H1 (cell line): ENCODE measurements at regions of chr7 and their contacts with region 1.

Region 1: GRCh38 chr7:5557920-5558401 is 134.3 kb upstream of the TNRC18 start:
- DNase-seq: no peak
- H3K4me3 ChIP-seq: no peak overlapping the region
- H3K27ac ChIP-seq: no peak overlapping the region
- H3K4me1 ChIP-seq: peaks cover 0 to 15% (median 11%) of the 10 kb centered on the region in 4 experiments; a peak in 5 of 7 replicates
- H3K27me3 ChIP-seq: no peaks in the 10 kb centered on the region
- CTCF ChIP-seq: no peak
- EP300 ChIP-seq: no peak
- POLR2A ChIP-seq: no peak
- RAD21 ChIP-seq: no peak

Region 2: GRCh38 chr7:5500056-5500776 is 57.7 kb before region 1 on chr7:
- CTCF ChIA-PET with region 1: interaction called, 20 read pairs
- POLR2A ChIA-PET with region 1: no interaction called
- DNase-seq: no peak
- H3K4me3 ChIP-seq: no peak overlapping the region
- H3K27ac ChIP-seq: no peak overlapping the region
- H3K4me1 ChIP-seq: no peaks in the 10 kb centered on the region; a peak in 2 of 7 replicates
- H3K27me3 ChIP-seq: no peaks in the 10 kb centered on the region
- CTCF ChIP-seq: no peak
- EP300 ChIP-seq: no peak
- POLR2A ChIP-seq: no peak
- RAD21 ChIP-seq: no peak

Region 3: DNA sequence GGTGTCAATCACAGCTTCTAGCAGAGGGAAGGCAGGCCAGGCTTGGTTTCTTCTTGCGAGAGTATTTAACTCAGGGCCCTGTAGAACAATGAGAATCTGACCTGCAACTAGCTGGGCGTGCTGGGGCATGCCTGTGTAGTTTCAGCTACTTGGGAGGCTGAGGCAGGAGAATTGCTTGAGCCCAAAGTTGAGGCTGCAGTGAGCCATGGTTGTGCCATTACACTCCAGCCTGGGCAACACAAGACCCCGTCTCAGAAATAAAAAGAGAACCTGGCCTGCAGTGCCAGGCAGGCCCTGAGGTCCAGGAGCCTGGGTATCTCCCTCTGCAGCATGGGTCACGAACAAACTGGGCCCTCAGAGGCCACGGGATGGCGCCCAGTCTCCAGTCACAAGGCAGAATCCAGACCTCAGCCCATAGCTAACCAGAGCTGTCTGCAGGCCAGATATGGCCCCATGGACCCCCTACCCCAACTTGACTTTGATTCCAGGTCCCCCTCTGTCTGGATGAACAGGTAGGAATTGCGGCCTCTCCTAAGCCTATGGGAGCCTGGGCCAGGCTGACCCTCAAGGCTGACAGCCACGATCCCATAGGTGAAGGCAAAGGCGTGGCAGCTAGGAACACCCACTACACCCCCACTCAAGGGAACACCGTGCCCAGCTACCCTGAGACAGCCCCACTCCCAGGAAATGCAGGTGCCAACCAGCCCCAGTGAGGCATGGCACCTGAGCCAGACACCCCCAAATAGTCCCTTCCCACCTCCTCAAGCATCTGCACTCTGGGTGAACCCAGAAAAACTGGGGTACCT is 31.7 kb before region 1 on chr7:
- CTCF ChIA-PET with region 1: interaction called, 18 read pairs
- POLR2A ChIA-PET with region 1: no interaction called
- DNase-seq: peak in 1 of 2 experiments; percentile 76
- H3K4me3 ChIP-seq: peak overlapping the region in 1 of 4 experiments; percentile 90; a peak in 2 of 8 replicates
- H3K27ac ChIP-seq: peak overlapping the region; percentile 24; the same call in 1 of the 2 replicates
- H3K4me1 ChIP-seq: peaks cover 0 to 21% (median 12%) of the 10 kb centered on the region in 4 experiments; a peak in 6 of 7 replicates
- H3K27me3 ChIP-seq: no peaks in the 10 kb centered on the region
- CTCF ChIP-seq: peak in 1 of 3 experiments; percentile 8; a peak in 1 of 4 replicates
- EP300 ChIP-seq: no peak
- POLR2A ChIP-seq: peak in 1 of 2 experiments; percentile 72; a peak in 2 of 3 replicates
- RAD21 ChIP-seq: peak; percentile 17 to 26; a peak in 2 of 4 replicates

Region 4: GRCh38 chr7:5574770-5575269 is 16.9 kb after region 1 on chr7:
- CTCF ChIA-PET with region 1: interaction called, 11 read pairs
- POLR2A ChIA-PET with region 1: no interaction called
- DNase-seq: peak in 1 of 2 experiments; percentile 64
- H3K4me3 ChIP-seq: peak overlapping the region in 2 of 4 experiments; percentile 5 to 44; a peak in 3 of 8 replicates
- H3K27ac ChIP-seq: no peak overlapping the region; the same call in 1 of the 2 replicates
- H3K4me1 ChIP-seq: peaks cover 0 to 11% (median 6%) of the 10 kb centered on the region in 4 experiments; a peak in 6 of 7 replicates
- H3K27me3 ChIP-seq: no peaks in the 10 kb centered on the region
- CTCF ChIP-seq: no peak
- EP300 ChIP-seq: no peak
- POLR2A ChIP-seq: no peak
- RAD21 ChIP-seq: no peak

Region 5: GRCh38 chr7:5607951-5608656 is 50.1 kb after region 1 on chr7:
- CTCF ChIA-PET with region 1: interaction called, 10 read pairs
- POLR2A ChIA-PET with region 1: no interaction called
- DNase-seq: no peak
- H3K4me3 ChIP-seq: no peak overlapping the region
- H3K27ac ChIP-seq: no peak overlapping the region
- H3K4me1 ChIP-seq: peaks cover 2 to 21% (median 9%) of the 10 kb centered on the region in 4 experiments
- H3K27me3 ChIP-seq: no peaks in the 10 kb centered on the region
- CTCF ChIP-seq: no peak
- EP300 ChIP-seq: no peak
- POLR2A ChIP-seq: peak in 1 of 2 experiments; percentile 27; a peak in 1 of 3 replicates
- RAD21 ChIP-seq: no peak; a peak in 1 of 4 replicates

Region 6: GRCh38 chr7:6121141-6121540 is 563.2 kb after region 1 on chr7:
- CTCF ChIA-PET with region 1: no interaction called
- POLR2A ChIA-PET with region 1: no interaction called
- DNase-seq: no peak
- H3K4me3 ChIP-seq: no peak overlapping the region
- H3K27ac ChIP-seq: no peak overlapping the region
- H3K4me1 ChIP-seq: no peaks in the 10 kb centered on the region
- H3K27me3 ChIP-seq: no peaks in the 10 kb centered on the region
- CTCF ChIP-seq: no peak
- EP300 ChIP-seq: no peak
- POLR2A ChIP-seq: no peak
- RAD21 ChIP-seq: no peak